ENCODE measurements at regions of chr22 and their contacts with region 1.

Region 1: GRCh38 chr22:30253205-30253852 is 6.8 kb upstream of the LIF start:
- DNase-seq: peak; percentile 85
- ATAC-seq: peak; percentile 58

Region 2: GRCh38 chr22:30104501-30105156 is 148.7 kb before region 1 on chr22:
- intact Hi-C with region 1: loop called (anchors 1 kb)
- DNase-seq: no peak
- ATAC-seq: no peak

Region 3: GRCh38 chr22:30205281-30206115 is 47.8 kb before region 1 on chr22:
- intact Hi-C with region 1: loop called (anchors 5 kb)
- DNase-seq: peak; percentile 74
- ATAC-seq: peak; percentile 66

Measured in Right ventricle myocardium inferior (tissue), 1 donor.